Left colon (tissue), 2 donors: ENCODE measurements at regions of chr7 and their contacts with region 1.

Region 1: DNA sequence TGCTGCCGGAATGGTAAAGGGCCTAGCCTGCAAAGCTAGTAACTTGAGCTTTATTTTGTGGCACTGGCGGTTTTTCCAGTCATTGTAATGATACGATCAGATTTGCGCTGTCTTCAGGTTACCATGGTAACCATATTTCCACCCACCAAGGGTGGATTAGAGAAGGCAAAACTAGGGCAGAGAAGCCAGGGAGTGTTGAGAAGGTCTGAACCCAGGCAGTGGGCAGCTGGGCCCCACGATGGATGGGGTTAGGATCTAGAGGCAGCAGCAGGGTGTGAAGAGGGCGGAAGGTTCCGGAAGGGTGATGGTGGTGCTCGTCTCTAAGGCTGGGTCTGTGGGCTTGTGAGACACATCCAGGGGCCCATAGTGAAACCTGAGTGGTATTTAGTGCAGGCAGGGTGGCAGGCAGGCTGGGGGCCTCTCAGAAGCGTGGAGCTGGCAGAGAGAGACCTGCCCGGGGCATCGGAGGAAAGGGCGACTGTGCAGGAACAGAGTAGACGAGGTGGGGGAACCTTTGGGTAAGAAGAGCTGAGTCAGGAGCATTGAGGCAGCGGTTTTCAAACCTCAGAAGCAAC is 87.9 kb upstream of the GTF2I start:
- DNase-seq: no peak
- ATAC-seq: no peak

Region 2: DNA sequence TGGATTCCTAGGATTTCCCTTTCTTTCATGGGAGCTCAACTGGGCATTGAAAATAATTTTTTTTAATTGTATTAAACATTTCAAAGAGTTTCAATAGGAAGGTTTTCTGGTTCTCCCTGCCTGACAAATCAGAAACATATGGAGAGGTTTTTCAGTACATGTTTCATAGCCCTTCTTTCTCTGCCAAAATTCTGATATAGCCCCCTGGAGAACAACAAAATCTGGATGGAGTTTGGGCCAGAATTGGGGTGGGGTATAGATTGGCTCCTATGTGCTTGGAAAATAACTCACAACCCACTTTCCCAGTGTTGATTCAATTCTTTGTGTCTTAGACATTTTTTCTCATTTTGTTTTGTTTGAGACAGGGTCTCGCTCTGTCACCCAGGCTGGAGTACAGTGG is 420.0 kb before region 1 on chr7:
- intact Hi-C with region 1: no loop called
- DNase-seq: no peak
- ATAC-seq: no peak

Region 3: GRCh38 chr7:74206589-74207120 is 362.9 kb before region 1 on chr7:
- intact Hi-C with region 1: no loop called
- DNase-seq: peak; percentile 74 to 91
- ATAC-seq: peak; percentile 83

Region 4: DNA sequence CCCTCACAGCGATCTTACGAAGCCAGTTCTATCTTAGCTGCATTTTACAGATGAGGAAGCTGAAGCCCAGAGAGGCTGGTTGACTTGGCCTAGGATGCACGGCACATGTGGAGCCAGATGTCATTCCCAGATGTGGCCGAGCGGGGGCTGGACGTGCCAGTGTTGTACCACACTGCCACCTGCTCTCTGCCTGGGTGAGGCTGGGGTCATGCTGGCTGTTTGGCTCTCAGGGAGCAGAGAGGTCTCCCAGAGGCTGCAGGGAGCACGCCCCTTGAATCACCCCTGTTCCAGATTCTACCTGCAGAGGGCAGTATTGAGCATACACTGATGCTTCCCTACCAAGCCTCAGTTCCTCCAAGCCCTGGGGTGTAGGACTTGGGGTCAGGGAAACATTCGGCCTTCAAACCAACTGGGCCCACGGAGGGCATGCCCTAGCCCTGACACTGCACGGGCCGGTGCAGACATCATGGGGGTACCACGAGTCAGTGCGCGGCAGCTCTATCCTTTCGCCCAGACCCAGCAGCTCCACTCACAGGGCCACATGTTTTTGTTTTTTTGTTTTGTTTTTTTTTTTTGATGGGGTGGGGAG is 119.7 kb before region 1 on chr7:
- intact Hi-C with region 1: loop called (anchors 10 kb)
- DNase-seq: peak; percentile 47 to 67
- ATAC-seq: peak; percentile 16